Right ventricle myocardium inferior (tissue), 1 donor: ENCODE measurements at regions of chr12 and their contacts with region 1.

Region 1: DNA sequence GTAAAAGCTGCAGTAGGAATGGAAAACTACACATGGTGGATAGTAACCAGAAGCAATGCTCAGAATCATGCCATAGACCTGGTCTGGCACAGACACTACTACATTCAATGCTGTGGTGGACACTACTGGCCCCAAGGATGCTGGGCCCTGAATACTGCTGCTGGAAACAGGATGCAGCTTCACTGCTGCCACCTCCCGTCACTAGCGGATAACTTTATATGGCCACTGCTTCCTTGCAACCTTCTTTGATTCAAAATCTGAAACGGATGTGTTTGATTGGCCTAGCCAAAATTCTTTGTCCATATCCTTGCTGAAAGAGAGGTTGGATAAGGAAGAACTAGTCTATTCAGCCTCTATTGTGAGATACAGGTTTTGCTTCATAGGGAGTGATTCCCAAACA is 30.7 kb downstream of the ADCY6 start:
- DNase-seq: no peak
- ATAC-seq: no peak

Region 2: DNA sequence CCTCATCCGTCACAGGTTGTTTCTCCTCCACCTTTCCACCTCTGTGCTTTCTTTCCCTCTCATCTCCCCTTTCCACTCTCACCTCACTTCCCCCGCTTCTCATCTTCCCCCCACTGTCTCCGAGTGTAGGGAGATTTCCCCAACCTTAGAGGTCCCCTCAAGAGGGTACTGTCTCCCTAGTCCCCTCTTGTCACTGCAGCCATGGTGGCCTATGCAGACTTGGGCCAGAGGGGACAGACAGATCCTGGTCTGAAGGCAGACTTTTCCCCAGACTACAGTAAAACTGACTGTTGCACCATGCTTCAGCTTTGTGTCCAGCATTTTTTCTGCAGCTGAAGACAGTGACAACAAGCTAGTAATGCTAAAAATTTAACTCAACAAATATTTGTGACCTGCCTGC is 117.4 kb before region 1 on chr12:
- intact Hi-C with region 1: no loop called
- DNase-seq: no peak
- ATAC-seq: no peak

Region 3: DNA sequence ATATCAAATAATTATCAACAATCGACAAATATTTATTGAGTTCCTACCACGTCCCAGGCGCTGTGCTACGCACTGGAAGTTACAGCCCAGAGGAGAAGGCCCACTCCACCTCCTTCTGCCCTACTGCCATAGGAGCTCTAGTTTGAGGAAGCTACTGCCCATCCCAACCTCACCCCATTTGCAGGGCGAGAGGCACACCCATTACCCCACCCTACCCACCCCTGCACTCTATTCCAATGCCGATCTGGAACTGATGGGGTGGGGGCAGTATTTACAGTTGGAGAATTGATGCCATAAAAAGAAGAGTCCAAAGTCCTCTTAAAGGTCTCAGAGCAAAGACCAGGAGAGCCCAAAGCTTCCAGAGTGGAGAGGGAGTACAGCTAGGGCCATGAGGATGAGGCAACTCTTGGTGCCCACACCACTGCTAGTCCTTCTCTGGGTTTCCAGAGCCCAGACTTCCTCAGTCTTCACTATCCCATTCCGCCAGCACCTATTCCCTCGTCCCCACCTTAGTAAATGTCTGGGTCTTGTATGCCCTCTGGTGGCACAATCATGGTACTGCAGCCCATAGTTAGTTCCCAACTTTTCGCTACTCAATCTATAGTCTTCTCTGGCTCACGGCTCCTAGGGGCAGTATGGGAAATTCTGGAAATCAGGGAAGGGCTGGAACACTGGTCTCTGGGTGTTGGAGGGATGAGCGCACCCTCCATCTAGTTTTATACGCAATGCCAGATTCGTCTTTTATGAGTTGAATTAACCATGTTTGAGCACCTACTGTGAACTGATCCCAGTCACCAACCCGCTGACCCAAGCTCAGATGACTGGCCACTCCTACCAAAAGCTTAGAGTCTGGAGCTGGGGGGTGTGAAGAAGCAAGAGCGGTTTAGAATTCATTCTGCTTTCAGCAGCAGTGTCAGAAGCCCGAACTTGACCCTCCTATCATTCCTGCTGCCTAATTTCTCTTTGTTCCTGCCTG is 37.5 kb after region 1 on chr12:
- intact Hi-C with region 1: loop called (anchors 1 kb)
- DNase-seq: no peak
- ATAC-seq: peak; percentile 92

Region 4: DNA sequence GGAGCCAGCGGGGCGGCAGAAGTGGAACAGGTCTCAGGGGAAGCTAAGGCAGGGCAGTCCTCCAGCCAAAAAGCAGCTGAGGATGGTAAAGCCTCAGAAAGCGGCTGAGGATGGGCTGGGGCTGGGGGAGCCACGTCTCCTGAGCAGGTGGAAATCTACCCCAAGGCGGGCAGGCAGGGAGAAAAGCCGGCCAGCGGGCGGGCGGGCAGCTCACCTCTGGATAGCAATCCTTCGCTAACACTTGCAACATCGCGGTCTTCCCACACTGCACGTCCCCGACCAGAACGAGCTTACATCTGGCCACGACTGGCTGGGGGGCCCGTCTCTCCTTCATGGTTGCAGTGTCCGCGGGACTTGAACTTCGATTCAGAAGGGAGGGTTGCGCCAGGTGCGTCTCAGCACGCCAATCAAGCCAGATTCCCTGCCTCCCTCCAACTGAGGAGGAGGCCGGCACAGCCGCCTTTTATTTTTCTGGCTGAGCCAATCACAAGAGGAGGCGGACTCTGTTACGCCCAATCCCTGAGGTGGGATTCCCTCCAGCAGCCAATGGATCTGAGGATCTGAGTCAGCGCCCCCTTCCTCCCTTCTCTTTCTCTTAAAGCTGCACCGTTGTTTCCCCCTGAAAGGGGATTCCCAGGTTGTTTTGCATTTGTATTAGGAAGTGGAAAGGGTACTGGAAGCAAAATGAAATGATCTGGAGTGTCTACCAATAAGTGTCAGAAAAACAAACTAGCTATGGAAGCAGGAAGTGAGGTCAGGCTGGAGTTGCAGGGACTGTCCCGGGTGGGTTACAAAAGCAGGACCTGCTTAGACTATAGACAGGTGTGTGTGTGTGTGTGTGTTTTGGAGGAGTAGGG is 107.4 kb after region 1 on chr12 and contains the start of gene RND1:
- intact Hi-C with region 1: no loop called
- DNase-seq: peak; percentile 89
- ATAC-seq: peak; percentile 98
- total RNA-seq, gene RND1: 0.41 TPM

Region 5: DNA sequence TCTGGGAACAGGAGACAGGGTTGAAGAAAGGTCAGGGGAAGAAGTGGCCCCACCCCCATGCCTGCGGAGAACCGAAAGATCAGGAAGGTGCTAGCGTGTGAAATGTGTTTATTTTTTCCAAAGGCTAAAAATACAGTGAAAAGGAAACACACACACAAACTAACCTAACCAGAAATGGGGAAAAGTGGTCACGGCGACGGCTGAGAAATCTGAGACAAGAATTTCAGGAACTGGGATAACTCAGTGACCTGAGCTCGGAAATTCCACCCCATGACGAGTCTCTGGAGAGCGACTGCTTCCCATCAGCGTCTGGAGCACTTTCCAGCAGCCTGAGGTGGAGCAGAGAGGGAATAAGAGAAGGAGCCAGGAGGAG is 124.1 kb after region 1 on chr12:
- intact Hi-C with region 1: no loop called
- DNase-seq: no peak
- ATAC-seq: peak; percentile 37